Right ventricle myocardium inferior (tissue), 1 donor: ENCODE measurements at regions of chr16 and their contacts with region 1.

Region 1: DNA sequence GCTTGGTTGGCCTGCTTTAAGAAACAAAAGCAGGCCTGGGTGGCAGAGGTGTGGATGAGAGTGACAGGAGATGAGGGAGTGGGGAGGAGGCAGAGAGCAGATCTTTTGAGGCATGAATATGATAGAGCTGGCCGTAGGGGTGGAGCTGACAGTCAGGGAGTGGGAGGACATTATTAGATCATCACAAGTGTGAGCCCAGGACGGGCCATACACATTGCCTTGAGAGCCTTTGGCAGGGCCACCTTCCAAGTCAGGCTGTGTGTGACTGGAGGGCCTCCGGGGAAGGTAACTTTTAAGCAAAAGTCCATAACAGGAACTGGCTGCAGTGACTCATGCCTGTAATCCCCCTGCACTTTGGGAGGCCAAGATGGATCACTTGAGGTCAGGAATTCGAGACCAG is 26.3 kb downstream of the GINS3 start:
- DNase-seq: no peak
- ATAC-seq: peak; percentile 80

Region 2: DNA sequence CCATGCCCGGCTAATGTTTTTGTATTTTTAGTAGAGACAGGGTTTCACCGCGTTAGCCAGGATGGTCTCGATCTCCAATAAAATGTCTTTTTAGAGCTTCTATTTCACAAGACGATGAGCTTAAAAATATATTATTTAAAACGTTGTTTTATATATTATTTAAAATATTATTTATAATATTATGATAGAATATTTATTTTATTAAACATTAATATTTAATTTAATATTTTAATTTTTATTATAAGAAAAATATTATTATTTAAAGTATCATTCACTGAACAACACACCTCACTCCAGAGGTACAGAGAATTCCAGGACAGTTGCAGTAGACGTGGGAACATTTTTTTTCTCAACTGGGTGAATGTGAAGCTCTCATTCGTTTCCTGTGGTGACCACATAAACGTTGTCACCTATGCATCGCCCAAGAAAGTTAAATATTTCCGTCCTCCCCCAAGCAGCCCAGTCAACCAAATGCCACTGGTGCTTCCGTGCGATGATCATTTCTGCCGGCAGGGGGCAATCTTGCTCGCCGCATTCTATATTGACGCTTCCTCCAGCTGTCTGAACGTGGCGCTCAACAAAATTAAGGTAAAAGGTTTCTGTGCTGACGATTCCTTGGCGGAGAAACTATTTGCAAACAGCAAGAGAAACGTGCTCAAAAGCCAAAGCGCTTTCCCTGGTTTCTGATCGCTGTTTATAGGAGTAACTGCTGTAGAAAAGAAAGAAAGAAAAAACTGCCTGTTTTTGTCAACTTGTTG is 82.1 kb before region 1 on chr16:
- intact Hi-C with region 1: no loop called
- DNase-seq: peak; percentile 84
- ATAC-seq: peak; percentile 66

Region 3: GRCh38 chr16:58459344-58460218 is 41.0 kb after region 1 on chr16:
- intact Hi-C with region 1: loop called (anchors 5 kb)
- DNase-seq: no peak
- ATAC-seq: no peak